ENCODE measurements at regions of chr6 and their contacts with region 1.

Region 1: DNA sequence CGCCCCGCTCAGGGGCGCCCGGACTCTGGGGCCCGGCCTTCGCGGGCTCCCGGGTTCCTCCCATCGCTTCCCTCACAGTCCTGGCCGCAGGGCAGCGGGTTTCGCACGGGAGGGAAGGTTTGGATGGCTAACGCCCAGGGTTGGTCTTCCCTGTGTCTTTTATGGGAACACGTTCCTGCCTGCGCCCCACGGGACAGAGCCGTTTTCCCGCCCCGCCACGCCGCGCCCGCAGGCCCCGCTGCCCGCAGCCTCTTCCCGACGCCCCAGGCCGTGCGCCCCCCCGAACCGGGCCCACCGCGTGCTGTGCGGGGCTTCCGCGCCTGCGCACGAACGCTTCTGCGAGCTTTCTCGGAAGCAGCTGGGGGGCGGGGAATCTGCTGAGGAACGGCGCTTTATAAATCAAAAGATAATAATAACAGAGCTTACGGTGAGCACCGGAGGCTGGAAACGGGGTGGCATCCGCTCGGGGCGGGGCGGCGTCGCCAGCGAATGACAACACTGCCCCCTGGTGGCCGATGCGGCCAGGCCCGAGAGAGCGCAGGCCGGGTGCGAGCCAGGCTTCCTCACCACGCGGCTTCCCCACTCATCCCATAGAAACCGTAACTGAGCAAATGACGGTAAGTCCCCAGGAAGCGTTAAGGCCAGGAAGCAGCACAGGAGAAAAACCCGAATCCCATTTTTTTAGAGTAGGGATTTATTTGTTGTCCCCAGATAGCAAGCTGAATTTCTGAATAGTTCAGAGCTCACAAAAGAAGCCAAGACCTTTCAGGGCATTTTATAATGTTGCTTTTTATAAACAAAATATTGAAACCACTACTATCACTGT is 116.4 kb downstream of the MYLK4 start:
- DNase-seq: peak; percentile 82
- ATAC-seq: peak; percentile 97
- H3K4me3 Mint-ChIP-seq: peak overlapping the region; percentile 79
- H3K27ac Mint-ChIP-seq: no peak overlapping the region
- H3K4me1 Mint-ChIP-seq: peaks cover 3% of the 10 kb centered on the region
- H3K27me3 Mint-ChIP-seq: peaks cover 2% of the 10 kb centered on the region
- CTCF ChIP-seq: no peak

Region 2: GRCh38 chr6:1596088-1596852 is 1038.1 kb before region 1 on chr6:
- CTCF ChIA-PET with region 1: interaction called, 91 read pairs
- POLR2A ChIA-PET with region 1: interaction called, 4 read pairs
- intact Hi-C with region 1: loop called (anchors 1 kb)
- DNase-seq: peak; percentile 50
- ATAC-seq: peak; percentile 87
- H3K4me3 Mint-ChIP-seq: no peak overlapping the region
- H3K27ac Mint-ChIP-seq: no peak overlapping the region
- H3K4me1 Mint-ChIP-seq: peaks cover 4% of the 10 kb centered on the region
- H3K27me3 Mint-ChIP-seq: peaks cover 49% of the 10 kb centered on the region
- CTCF ChIP-seq: no peak

Region 3: DNA sequence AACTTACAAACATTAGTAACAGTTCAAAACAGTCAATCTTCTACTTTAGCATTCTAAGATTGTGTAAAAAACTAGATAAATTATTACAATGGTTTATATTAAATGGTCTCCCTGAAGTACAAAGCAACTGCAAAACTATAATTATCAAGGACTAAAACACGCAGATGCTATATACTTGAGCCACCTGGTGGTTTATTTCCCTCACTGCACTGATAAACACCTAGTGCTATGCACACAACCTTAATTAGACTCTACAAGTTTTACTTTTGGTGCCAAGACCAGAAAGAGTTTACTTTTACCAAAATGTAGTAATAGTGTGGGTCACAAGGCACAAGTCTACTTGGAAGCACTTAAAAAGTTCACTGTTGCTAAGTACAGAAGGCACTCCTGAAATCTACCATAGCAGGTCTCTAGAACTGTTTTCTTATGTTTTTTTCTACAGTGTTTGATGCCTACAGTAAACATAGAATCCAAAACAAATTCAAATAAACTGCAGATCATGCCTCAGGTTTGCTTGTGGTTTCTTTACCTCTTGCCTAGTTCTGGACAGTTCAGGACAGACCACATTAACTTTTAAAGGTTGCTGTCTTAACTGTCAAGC is 438.2 kb before region 1 on chr6:
- CTCF ChIA-PET with region 1: interaction called, 5 read pairs
- POLR2A ChIA-PET with region 1: no interaction called
- intact Hi-C with region 1: loop called (anchors 5 kb)
- DNase-seq: no peak
- ATAC-seq: peak; percentile 65
- H3K4me3 Mint-ChIP-seq: no peak overlapping the region
- H3K27ac Mint-ChIP-seq: no peak overlapping the region
- H3K4me1 Mint-ChIP-seq: no peaks in the 10 kb centered on the region
- H3K27me3 Mint-ChIP-seq: no peaks in the 10 kb centered on the region
- CTCF ChIP-seq: peak; percentile 33

Region 4: DNA sequence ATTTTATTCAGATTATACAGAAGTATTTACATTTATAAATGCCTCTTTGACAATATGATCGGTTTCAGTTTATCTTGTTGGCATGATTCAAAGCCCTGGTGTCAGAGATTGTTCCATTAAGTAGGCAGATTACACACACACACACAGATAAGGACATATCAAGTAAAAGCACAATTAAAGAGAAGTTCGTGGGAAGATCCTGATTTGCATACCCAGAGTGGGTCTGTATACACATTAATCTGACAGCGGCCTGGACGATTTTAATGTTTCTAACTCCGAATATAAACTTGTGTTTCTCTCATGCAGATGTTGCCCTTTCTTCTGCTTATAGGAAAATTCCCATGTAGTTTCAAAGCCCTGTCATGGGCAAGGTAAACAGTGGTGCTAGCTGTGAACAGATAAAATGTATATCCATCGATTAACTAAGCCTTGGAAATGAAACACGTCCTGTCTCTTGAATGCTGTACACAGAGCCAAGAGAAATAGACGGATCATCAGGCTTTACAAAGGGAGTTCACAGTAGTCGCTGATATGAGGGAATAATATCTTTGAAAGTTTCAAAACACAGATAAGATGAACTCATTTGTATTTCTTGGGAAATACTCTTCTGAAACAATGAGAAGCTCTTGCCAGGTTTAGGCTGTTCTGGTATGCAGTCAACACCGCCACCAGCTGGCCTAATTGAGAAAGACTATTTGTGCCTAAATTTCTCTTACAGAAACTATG is 280.8 kb before region 1 on chr6:
- CTCF ChIA-PET with region 1: interaction called, 10 read pairs
- POLR2A ChIA-PET with region 1: no interaction called
- intact Hi-C with region 1: no loop called
- DNase-seq: no peak
- ATAC-seq: no peak
- H3K4me3 Mint-ChIP-seq: no peak overlapping the region
- H3K27ac Mint-ChIP-seq: no peak overlapping the region
- H3K4me1 Mint-ChIP-seq: no peaks in the 10 kb centered on the region
- H3K27me3 Mint-ChIP-seq: no peaks in the 10 kb centered on the region
- CTCF ChIP-seq: no peak

Region 5: GRCh38 chr6:2412731-2413130 is 221.6 kb before region 1 on chr6:
- CTCF ChIA-PET with region 1: no interaction called
- POLR2A ChIA-PET with region 1: no interaction called
- intact Hi-C with region 1: no loop called
- DNase-seq: no peak
- ATAC-seq: no peak
- H3K4me3 Mint-ChIP-seq: no peak overlapping the region
- H3K27ac Mint-ChIP-seq: no peak overlapping the region
- H3K4me1 Mint-ChIP-seq: no peaks in the 10 kb centered on the region
- H3K27me3 Mint-ChIP-seq: no peaks in the 10 kb centered on the region
- CTCF ChIP-seq: no peak

Region 6: GRCh38 chr6:2514965-2515555 is 119.3 kb before region 1 on chr6:
- CTCF ChIA-PET with region 1: no interaction called
- POLR2A ChIA-PET with region 1: no interaction called
- intact Hi-C with region 1: no loop called
- DNase-seq: no peak
- ATAC-seq: no peak
- H3K4me3 Mint-ChIP-seq: no peak overlapping the region
- H3K27ac Mint-ChIP-seq: no peak overlapping the region
- H3K4me1 Mint-ChIP-seq: no peaks in the 10 kb centered on the region
- H3K27me3 Mint-ChIP-seq: peaks cover 7% of the 10 kb centered on the region
- CTCF ChIP-seq: no peak

Region 7: DNA sequence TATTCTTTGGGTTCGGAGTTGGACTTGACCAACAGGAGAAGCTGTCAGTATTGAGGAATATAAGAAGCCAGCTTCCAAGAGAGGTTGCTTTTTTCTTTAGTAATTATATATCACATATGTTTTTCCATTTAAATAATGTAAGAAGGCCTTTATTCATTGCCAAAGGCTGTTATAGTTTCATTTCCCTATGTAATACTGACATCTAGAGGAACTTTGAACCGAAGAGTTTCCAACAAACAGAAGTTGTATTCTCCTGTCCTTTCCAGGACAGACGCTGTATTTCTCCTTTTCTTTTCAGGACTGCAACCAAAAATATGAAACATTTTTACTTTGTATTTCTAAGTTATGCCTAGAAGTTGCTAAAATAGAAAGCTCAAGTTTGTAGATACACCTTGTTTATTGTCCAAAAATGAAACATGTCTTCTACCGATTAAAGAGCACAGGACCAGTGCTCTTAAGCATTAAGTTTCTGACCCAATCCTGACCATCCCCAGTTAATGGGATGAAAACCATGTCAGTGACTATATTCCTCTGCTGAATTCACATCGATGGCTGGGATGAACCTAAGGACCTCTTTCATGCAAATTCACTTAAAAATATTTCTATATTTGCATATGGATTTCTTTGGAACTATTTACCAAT is 61.2 kb after region 1 on chr6:
- CTCF ChIA-PET with region 1: interaction called, 3 read pairs
- POLR2A ChIA-PET with region 1: no interaction called
- intact Hi-C with region 1: loop called (anchors 2 kb)
- DNase-seq: no peak
- ATAC-seq: no peak
- H3K4me3 Mint-ChIP-seq: no peak overlapping the region
- H3K27ac Mint-ChIP-seq: no peak overlapping the region
- H3K4me1 Mint-ChIP-seq: no peaks in the 10 kb centered on the region
- H3K27me3 Mint-ChIP-seq: peaks cover 6% of the 10 kb centered on the region
- CTCF ChIP-seq: peak; percentile 28